GM12878 (cell line): ENCODE measurements at regions of chr6 and their contacts with region 1.

Region 1: GRCh38 chr6:32472781-32473375 is 33.2 kb downstream of the HLA-DRA start:
- DNase-seq: no peak
- ATAC-seq: peak; percentile 29
- H3K4me3 ChIP-seq: peak overlapping the region; percentile 39; the same call in 1 of the 2 replicates
- H3K27ac ChIP-seq: peak overlapping the region; percentile 90
- H3K4me1 ChIP-seq: peaks cover 9% of the 10 kb centered on the region
- H3K27me3 ChIP-seq: no peaks in the 10 kb centered on the region
- CTCF ChIP-seq: no peak
- EP300 ChIP-seq: no peak
- POLR2A ChIP-seq: no peak
- RAD21 ChIP-seq: no peak

Region 2: DNA sequence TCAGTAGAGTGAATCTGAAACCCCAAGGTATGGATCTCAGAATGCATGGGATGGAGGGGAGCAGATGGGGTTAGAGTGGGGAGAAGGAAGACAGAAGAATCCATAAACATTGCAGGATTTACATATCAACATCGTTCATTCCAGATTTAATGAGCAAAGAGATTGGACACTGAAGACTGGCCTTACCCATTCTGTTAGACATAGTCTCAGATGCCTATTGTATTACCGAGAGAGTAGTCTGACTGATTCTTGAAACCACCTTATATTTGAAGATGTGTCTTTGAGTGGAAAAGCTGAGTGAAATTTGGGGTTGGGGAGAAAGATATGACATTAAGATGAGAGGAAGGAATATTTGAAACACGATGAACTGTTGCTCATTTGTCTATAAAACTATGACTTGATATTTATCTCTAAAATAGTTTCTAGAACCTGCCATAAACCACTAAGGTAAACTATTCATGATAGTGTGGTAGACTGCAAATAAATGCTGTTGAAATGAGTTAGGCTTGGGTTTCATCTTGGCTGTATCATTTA is 27.5 kb before region 1 on chr6:
- CTCF ChIA-PET with region 1: interaction called, 4 read pairs
- POLR2A ChIA-PET with region 1: interaction called, 30 read pairs
- RAD21 ChIA-PET with region 1: interaction called, 3 read pairs
- SMC1A ChIA-PET with region 1: interaction called, 3 read pairs
- in situ Hi-C with region 1: no loop called
- intact Hi-C with region 1: no loop called
- DNase-seq: no peak
- ATAC-seq: peak; percentile 44
- H3K4me3 ChIP-seq: no peak overlapping the region
- H3K27ac ChIP-seq: no peak overlapping the region
- H3K4me1 ChIP-seq: peaks cover 4% of the 10 kb centered on the region; the same call in 1 of the 2 replicates
- H3K27me3 ChIP-seq: no peaks in the 10 kb centered on the region
- CTCF ChIP-seq: no peak
- EP300 ChIP-seq: no peak
- POLR2A ChIP-seq: no peak; the same call in 1 of the 2 replicates
- RAD21 ChIP-seq: no peak

Region 3: GRCh38 chr6:32462609-32463008 is 10.3 kb before region 1 on chr6:
- CTCF ChIA-PET with region 1: interaction called, 13 read pairs
- POLR2A ChIA-PET with region 1: interaction called, 14 read pairs
- RAD21 ChIA-PET with region 1: interaction called, 7 read pairs
- SMC1A ChIA-PET with region 1: interaction called, 27 read pairs
- in situ Hi-C with region 1: no loop called
- intact Hi-C with region 1: no loop called
- DNase-seq: peak; percentile 76
- ATAC-seq: peak; percentile 94
- H3K4me3 ChIP-seq: no peak overlapping the region
- H3K27ac ChIP-seq: no peak overlapping the region
- H3K4me1 ChIP-seq: peaks cover 6% of the 10 kb centered on the region
- H3K27me3 ChIP-seq: no peaks in the 10 kb centered on the region
- CTCF ChIP-seq: no peak
- EP300 ChIP-seq: peak; percentile 13 to 74; a peak in 2 of 4 replicates
- POLR2A ChIP-seq: no peak
- RAD21 ChIP-seq: no peak

Region 4: DNA sequence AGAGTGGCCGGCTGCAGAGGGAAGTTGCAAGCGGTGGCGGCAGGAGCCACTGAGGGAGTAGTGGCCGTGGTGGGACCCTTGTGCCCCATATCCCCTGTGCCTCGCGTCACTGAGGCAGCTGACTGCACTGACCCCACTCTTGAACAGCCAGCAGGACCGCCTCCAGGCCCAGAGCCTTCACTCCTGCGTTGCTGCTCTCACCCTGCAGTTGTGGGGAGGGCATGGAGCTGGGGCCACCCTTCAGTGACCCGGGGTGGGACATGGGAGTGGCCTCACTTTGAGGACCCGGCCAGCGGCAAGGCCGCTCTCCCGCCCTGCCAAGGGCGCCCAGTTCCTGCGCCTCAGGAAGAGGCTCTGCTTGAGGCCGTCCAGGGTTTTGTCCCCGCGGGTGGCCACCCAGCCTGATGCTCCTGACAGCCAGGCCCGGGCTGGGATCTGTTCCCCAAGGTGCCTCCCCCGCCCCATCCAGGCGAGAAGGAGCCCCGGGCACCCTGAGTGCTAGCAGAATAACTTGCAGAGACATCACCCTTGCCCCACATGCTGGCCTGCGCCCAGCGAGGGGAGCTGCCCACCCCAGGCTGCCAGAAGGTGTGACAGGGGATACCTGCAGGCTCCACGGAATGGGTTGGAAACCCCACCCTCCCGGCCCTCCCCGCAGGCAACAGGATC is 11.2 kb after region 1 on chr6:
- CTCF ChIA-PET with region 1: interaction called, 3 read pairs
- POLR2A ChIA-PET with region 1: interaction called, 14 read pairs
- RAD21 ChIA-PET with region 1: no interaction called
- SMC1A ChIA-PET with region 1: interaction called, 4 read pairs
- in situ Hi-C with region 1: no loop called
- intact Hi-C with region 1: no loop called
- DNase-seq: no peak
- ATAC-seq: no peak; the same call in 2 of the 3 replicates
- H3K4me3 ChIP-seq: no peak overlapping the region
- H3K27ac ChIP-seq: no peak overlapping the region
- H3K4me1 ChIP-seq: no peaks in the 10 kb centered on the region
- H3K27me3 ChIP-seq: no peaks in the 10 kb centered on the region
- CTCF ChIP-seq: no peak
- EP300 ChIP-seq: no peak
- POLR2A ChIP-seq: no peak
- RAD21 ChIP-seq: no peak

Region 5: GRCh38 chr6:32529697-32530429 is 57.0 kb after region 1 on chr6 and contains the start of gene HLA-DRB5:
- CTCF ChIA-PET with region 1: no interaction called
- POLR2A ChIA-PET with region 1: interaction called, 3 read pairs
- RAD21 ChIA-PET with region 1: no interaction called
- SMC1A ChIA-PET with region 1: no interaction called
- in situ Hi-C with region 1: loop called (anchors 10 kb)
- intact Hi-C with region 1: no loop called
- DNase-seq: peak; percentile 58
- ATAC-seq: peak; percentile 90
- H3K4me3 ChIP-seq: peak within 1 kb of the TSS; percentile 58; the same call in 1 of the 2 replicates
- H3K27ac ChIP-seq: peak within 1 kb of the TSS; percentile 92
- H3K4me1 ChIP-seq: no peaks in the 10 kb centered on the region
- H3K27me3 ChIP-seq: no peaks in the 10 kb centered on the region
- CTCF ChIP-seq: no peak
- EP300 ChIP-seq: no peak
- POLR2A ChIP-seq: peak; percentile 73
- RAD21 ChIP-seq: no peak
- polyA plus RNA-seq, gene HLA-DRB5: 38.5 to 40.6 TPM